Activated naive CD8-positive, alpha-beta T cell treated with anti-CD3 and anti-CD28 coated beads, Interleukin-2, amount 10 ng/mL, durations not matched to agents 7 days and 5 days (primary cell): ENCODE measurements at regions of chr14 and their contacts with region 1.

Region 1: DNA sequence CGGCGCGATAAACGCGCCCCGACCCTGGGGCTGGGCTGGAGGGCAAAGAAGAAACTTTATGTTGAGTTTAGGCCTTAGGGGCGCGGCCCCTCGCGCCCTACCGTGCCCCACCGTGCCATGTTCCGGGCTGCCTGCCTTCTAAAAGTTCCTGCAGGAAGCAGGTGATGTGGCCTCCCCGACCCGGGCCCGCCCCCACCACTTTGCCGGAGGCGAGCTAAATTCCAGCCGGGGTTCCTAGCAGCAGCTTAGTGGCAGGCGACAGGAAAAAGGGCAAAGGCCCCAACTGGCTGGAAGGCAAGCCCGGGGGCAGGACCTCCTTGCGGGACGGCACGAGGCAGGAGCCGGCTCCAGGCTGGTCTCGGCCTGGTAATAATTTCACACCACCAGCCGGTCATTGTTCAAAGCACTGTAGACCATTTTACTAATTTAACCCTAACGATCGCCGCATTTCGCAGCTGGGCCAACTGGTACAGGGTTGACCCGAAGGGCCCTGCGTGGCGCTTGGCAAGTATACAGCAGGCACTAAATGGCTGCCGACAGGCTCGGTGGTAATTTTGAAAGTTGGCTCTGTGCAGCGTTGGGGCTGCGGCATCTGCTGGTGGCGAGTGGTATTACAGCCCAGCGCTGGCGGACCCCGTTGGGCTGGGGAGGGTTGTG is 895 bp upstream of the CCDC88C start:
- DNase-seq: peak; percentile 89
- ATAC-seq: peak; percentile 12
- H3K4me3 Mint-ChIP-seq: peak overlapping the region; percentile 81
- H3K27ac Mint-ChIP-seq: peak overlapping the region; percentile 65
- H3K4me1 Mint-ChIP-seq: peaks cover 27% of the 10 kb centered on the region
- H3K27me3 Mint-ChIP-seq: peaks cover 2% of the 10 kb centered on the region

Region 2: DNA sequence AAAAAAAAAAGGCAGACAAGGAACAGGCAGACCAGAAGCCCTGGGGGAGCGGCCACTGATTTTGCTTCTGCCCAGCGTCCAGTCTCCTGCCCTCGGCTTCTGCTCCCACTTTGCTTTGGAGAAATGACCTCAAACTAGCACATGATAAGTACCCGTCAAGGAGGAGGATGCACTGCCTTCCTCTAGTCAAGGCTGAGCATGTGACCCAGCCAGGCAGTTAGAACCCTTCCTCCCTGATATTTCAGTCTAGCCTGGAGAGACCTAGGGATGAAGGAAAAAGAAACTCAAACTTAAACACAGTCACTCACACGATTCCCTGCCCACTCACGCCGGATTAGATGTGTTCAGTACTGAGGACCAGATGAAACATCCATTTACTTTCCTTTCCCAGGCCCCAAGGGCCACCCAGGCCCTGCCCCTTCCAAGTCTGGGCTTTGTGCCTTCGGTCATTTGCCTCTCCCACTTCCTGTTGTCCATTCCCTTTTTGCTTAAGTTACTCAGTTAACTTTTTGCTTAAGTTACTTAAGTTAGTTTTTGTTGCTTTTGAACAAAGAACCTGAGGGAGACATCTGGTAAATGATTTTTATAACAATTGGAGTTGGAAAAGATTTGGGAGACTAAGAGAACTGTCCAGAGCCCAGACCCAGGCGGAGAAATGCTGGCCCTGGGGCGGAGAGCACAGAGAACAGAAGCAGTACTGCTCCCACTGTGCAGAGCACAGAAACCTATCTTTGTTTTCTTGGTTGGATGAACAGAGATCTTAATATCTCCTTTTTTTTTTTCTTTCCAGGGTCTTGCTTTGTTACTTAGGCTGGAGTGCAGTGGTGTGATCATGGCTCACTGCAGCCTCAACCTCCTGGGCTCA is 579.3 kb before region 1 on chr14:
- POLR2A ChIA-PET with region 1: no interaction called
- DNase-seq: no peak
- ATAC-seq: no peak
- H3K4me3 Mint-ChIP-seq: no peak overlapping the region
- H3K27ac Mint-ChIP-seq: no peak overlapping the region
- H3K4me1 Mint-ChIP-seq: peaks cover 31% of the 10 kb centered on the region
- H3K27me3 Mint-ChIP-seq: peaks cover 31% of the 10 kb centered on the region

Region 3: GRCh38 chr14:91317381-91318308 is 100.9 kb before region 1 on chr14:
- POLR2A ChIA-PET with region 1: interaction called, 72 read pairs
- DNase-seq: peak; percentile 80
- ATAC-seq: peak; percentile 65
- H3K4me3 Mint-ChIP-seq: peak overlapping the region; percentile 77
- H3K27ac Mint-ChIP-seq: peak overlapping the region; percentile 95
- H3K4me1 Mint-ChIP-seq: peaks cover 52% of the 10 kb centered on the region
- H3K27me3 Mint-ChIP-seq: no peaks in the 10 kb centered on the region

Region 4: DNA sequence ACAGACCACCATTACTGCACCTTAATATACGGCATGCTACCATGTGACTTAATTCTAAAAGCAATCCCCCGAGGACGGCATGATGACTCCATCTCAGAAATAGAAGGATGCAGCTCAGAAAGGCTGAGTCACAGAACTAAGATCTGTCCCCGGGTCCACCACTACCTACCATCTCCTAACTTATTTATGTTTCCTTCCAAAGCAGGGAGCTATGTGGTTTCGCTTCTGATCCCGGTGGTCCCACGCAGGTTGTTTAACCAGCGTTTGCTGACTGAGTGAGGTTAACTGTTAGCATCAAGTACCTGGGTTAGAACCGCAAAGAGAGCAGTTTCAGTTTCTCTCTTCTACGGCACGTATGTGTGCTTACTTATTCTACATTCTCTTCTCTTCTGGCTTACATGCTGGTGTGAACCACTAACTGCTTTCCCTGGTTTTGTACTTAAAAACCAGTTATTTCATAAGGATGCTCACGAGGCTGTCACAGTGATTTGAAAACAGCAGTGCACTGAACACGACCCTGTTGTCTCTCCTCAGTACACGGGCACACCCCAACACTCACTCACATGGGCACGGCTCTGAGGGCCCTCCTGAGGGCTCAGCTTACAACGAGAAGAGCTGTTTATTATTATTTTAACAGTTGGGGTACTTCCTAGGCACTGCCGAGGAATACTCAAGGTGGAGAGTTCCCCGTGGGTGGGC is 67.6 kb before region 1 on chr14:
- POLR2A ChIA-PET with region 1: interaction called, 114 read pairs
- DNase-seq: peak; percentile 67
- ATAC-seq: peak; percentile 78
- H3K4me3 Mint-ChIP-seq: peak overlapping the region; percentile 85
- H3K27ac Mint-ChIP-seq: peak overlapping the region; percentile 96
- H3K4me1 Mint-ChIP-seq: peaks cover 78% of the 10 kb centered on the region
- H3K27me3 Mint-ChIP-seq: no peaks in the 10 kb centered on the region

Region 5: GRCh38 chr14:91396959-91397815 is 21.3 kb before region 1 on chr14:
- POLR2A ChIA-PET with region 1: interaction called, 139 read pairs
- DNase-seq: peak; percentile 75
- ATAC-seq: peak; percentile 81
- H3K4me3 Mint-ChIP-seq: peak overlapping the region; percentile 86
- H3K27ac Mint-ChIP-seq: peak overlapping the region; percentile 91
- H3K4me1 Mint-ChIP-seq: peaks cover 73% of the 10 kb centered on the region
- H3K27me3 Mint-ChIP-seq: no peaks in the 10 kb centered on the region